ENCODE measurements at regions of chr3 and their contacts with region 1.

Region 1: DNA sequence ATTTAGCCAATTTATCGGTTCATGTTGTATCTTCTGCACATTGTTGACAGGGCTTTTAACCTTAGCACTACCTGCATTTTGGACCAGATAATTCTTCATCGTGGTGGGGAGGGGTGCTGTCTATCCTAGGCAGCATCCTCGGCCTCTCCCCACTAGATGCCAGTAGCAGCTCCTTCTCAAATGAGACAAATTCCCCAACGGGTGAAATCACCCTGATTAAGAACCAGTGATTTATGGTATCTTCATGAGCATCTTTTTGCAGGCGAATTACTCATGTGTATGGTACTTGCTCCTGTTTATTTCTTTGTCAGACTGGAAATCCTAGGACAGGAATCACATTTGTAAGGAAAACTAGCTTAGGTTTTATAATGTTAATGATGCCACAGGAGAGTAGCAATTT is 68.0 kb downstream of the C3orf70 start:
- DNase-seq: no peak
- H3K4me3 ChIP-seq: no peak overlapping the region
- H3K27ac ChIP-seq: no peak overlapping the region
- H3K4me1 ChIP-seq: no peaks in the 10 kb centered on the region
- H3K27me3 ChIP-seq: no peaks in the 10 kb centered on the region
- CTCF ChIP-seq: no peak
- POLR2A ChIP-seq: no peak

Region 2: DNA sequence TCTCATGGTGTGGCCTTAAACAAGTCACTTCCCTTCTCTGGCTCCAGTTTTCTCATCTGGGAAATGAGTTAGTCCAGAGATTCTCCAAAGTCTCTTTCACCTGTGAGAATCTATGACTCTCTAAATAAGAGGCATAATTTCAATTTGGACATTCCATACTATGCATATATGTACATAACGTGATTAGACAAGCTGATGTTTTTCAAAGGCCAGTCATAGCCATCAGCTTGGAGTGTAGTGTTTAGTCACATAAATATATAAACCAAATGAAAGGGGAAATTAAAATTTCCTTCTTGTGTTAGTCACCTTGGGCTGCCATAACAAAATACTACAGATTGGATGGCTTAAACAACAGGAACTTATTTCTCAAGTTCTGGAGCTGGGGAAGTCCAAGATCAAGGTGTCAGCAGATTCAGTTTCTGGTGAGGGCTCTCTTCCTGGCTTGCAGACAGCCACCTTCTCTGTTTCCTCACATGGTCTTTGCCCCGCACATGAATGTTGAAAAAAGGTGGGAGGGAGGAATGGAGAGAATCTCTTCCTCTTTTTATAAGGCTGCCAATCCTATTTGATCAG is 394.6 kb after region 1 on chr3:
- intact Hi-C with region 1: loop called (anchors 5 kb)
- DNase-seq: no peak
- H3K4me3 ChIP-seq: no peak overlapping the region
- H3K27ac ChIP-seq: no peak overlapping the region
- H3K4me1 ChIP-seq: no peaks in the 10 kb centered on the region
- H3K27me3 ChIP-seq: no peaks in the 10 kb centered on the region
- CTCF ChIP-seq: no peak
- POLR2A ChIP-seq: no peak